Activated CD4-positive, alpha-beta T cell treated with anti-CD3 and anti-CD28 coated beads, Interleukin-2, amount 10 ng/mL, durations not matched to agents 24 days and 14 days (primary cell): ENCODE measurements at regions of chr7 and their contacts with region 1.

Region 1: DNA sequence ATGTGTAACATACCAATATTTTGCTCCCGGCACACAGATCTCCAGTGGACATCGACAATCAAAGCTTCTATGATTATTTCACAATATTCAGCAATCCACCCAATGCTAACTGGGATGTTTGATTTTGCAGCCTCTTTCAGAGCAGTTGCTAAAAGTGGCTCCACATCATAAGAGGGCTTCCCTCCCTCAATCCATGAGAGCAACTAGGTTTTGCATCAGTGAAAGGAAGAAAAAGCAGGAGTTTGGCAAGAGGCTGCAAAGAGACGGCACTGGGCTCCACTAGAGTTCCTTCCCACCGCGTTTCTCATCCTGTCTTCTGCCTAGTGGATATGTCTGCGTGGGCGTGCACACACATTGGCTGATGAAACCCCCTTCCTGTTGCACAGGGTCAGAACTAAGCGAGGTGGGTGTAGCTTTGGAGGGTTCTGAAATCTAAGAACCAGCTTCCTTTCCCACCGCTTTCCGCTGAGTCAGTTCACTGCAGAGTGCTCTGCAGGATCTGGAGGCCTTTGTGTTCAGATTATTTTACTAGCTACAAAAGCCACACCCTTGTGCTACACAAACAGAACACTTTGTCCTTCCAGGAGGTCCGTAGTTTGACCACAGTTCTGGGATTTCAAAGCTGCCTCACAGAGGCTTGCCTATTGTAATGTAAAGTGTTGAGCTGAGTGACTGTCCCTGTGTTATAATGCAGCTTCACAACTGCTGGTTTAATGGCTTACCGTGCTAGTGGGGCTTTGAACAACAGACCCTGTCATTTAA is 28.1 kb downstream of the ARL4A start:
- DNase-seq: peak; percentile 77
- H3K4me3 Mint-ChIP-seq: peak overlapping the region; percentile 21
- H3K27ac Mint-ChIP-seq: peak overlapping the region; percentile 70
- H3K4me1 Mint-ChIP-seq: peaks cover 33% of the 10 kb centered on the region
- H3K27me3 Mint-ChIP-seq: no peaks in the 10 kb centered on the region

Region 2: GRCh38 chr7:12623897-12624498 is 91.6 kb before region 1 on chr7:
- intact Hi-C with region 1: no loop called
- DNase-seq: no peak
- H3K4me3 Mint-ChIP-seq: no peak overlapping the region
- H3K27ac Mint-ChIP-seq: no peak overlapping the region
- H3K4me1 Mint-ChIP-seq: peaks cover 4% of the 10 kb centered on the region
- H3K27me3 Mint-ChIP-seq: peaks cover 17% of the 10 kb centered on the region

Region 3: DNA sequence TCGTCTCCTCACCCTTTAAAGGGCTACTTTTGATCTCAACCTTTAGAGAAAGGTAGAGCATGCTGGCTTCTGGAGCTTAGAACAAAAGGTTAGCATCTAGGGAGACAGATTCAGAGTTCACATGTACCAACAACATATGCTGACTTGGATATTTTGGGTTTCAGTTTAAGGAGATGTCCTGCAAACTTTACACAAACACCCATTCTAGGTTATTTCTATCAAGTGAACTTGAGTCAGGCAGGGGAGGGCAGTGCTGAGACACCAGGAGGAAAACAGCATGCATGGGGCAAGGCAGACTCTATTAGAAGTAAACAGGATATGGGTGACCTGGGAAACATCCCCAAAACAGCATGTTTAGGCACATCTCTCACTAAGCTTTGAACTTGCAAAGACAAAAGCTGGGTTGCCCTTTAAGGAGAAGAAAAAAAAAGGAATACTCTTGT is 15.7 kb after region 1 on chr7:
- intact Hi-C with region 1: loop called (anchors 2 kb)
- DNase-seq: peak; percentile 77
- H3K4me3 Mint-ChIP-seq: peak overlapping the region; percentile 75
- H3K27ac Mint-ChIP-seq: peak overlapping the region; percentile 86
- H3K4me1 Mint-ChIP-seq: peaks cover 16% of the 10 kb centered on the region
- H3K27me3 Mint-ChIP-seq: no peaks in the 10 kb centered on the region